ENCODE measurements at regions of chr2 and their contacts with region 1.

Region 1: GRCh38 chr2:79219383-79219988 is 59.9 kb upstream of the REG3A start:
- DNase-seq: peak; percentile 8
- ATAC-seq: peak; percentile 79
- H3K4me3 ChIP-seq: no peak overlapping the region
- H3K27ac ChIP-seq: no peak overlapping the region
- H3K4me1 ChIP-seq: no peaks in the 10 kb centered on the region
- H3K27me3 ChIP-seq: no peaks in the 10 kb centered on the region
- CTCF ChIP-seq: peak; percentile 68 to 78 (median 70)
- EP300 ChIP-seq: no peak
- POLR2A ChIP-seq: no peak
- RAD21 ChIP-seq: peak; percentile 66

Region 2: GRCh38 chr2:78992451-78992806 is 227.1 kb before region 1 on chr2:
- CTCF ChIA-PET with region 1: no interaction called
- POLR2A ChIA-PET with region 1: no interaction called
- RAD21 ChIA-PET with region 1: no interaction called
- SMC1A ChIA-PET with region 1: no interaction called
- in situ Hi-C with region 1: no loop called
- intact Hi-C with region 1: loop called (anchors 2 kb)
- DNase-seq: no peak
- ATAC-seq: peak; percentile 79
- H3K4me3 ChIP-seq: no peak overlapping the region; the same call in 1 of the 2 replicates
- H3K27ac ChIP-seq: no peak overlapping the region
- H3K4me1 ChIP-seq: no peaks in the 10 kb centered on the region
- H3K27me3 ChIP-seq: peaks cover 2 to 4% of the 10 kb centered on the region in 2 experiments; a peak in 3 of 4 replicates
- CTCF ChIP-seq: peak; percentile 21 to 50 (median 33)
- EP300 ChIP-seq: no peak
- POLR2A ChIP-seq: no peak
- RAD21 ChIP-seq: no peak